B cell (primary cell): ENCODE measurements at regions of chr5 and their contacts with region 1.

Region 1: DNA sequence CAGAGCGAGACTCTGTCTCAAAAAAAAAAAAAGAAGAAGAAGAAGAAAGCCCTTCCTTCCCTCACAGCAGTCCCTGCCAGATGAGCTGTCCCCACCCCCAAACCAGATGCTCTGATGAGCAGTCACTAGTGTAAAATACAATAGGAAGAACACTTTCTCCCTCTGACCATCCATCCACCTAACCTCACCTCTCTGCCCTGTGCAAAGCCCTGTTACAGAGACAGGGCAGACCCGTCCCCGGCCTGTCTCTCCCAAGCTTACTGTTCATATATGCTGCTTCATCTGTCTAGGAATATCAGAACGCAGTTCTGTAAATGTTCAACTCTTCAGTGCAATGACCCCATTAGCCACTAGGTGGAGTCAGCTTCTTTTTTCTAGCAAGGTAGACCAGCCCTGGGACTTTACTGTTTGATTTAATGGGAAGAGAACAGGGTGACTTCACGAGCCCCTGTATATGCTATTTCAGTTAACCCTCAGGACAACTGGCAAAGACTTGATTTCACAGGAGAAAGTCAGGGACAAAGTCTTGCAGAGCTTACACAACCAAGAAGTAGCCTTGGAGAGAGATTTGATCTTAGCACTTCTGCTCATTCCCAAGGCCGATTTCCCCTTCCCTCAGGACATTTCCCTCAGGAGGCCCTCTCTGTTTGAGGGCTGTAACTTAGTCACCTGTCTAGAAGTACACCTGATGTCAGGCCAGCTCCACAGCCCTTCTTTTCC is 14.9 kb upstream of the FGFR4 start:
- DNase-seq: peak; percentile 90
- ATAC-seq: peak; percentile 88
- H3K4me3 ChIP-seq: peak overlapping the region in 3 of 5 experiments; percentile 11 to 25 (median 23)
- H3K4me3 Mint-ChIP-seq: peak overlapping the region; percentile 64
- H3K27ac ChIP-seq: peak overlapping the region; percentile 11 to 79
- H3K27ac Mint-ChIP-seq: peak overlapping the region; percentile 66
- H3K4me1 ChIP-seq: peaks cover 25 to 33% of the 10 kb centered on the region in 2 donors
- H3K4me1 Mint-ChIP-seq: peaks cover 31% of the 10 kb centered on the region
- H3K27me3 ChIP-seq: no peaks in the 10 kb centered on the region
- H3K27me3 Mint-ChIP-seq: no peaks in the 10 kb centered on the region
- CTCF ChIP-seq: peak; percentile 95

Region 2: GRCh38 chr5:176916337-176916736 is 155.5 kb before region 1 on chr5:
- CTCF ChIA-PET with region 1: no interaction called
- POLR2A ChIA-PET with region 1: no interaction called
- intact Hi-C with region 1: no loop called
- DNase-seq: no peak
- ATAC-seq: no peak
- H3K4me3 ChIP-seq: no peak overlapping the region
- H3K4me3 Mint-ChIP-seq: no peak overlapping the region
- H3K27ac ChIP-seq: no peak overlapping the region
- H3K27ac Mint-ChIP-seq: no peak overlapping the region
- H3K4me1 ChIP-seq: no peaks in the 10 kb centered on the region
- H3K4me1 Mint-ChIP-seq: no peaks in the 10 kb centered on the region
- H3K27me3 ChIP-seq: no peaks in the 10 kb centered on the region
- H3K27me3 Mint-ChIP-seq: no peaks in the 10 kb centered on the region
- CTCF ChIP-seq: no peak

Region 3: DNA sequence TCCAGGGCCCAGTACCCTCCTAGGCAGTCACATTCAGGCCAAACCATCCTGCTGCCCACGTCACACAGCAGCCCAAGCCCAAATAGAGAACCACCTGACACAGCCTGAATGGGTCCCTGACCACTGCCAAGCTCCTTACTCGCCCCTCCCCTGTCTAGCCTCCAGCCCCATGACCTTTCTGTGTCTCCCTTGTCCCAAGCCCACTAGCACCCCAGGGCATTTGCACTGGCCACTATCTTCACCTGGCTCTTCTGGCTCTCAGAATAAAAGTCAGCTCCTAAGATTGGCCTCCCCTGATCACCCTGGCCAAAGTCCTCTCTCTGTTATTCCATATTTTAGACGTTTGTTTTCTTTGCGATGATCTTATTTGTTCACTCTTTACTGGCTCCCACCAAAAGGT is 35.3 kb after region 1 on chr5:
- CTCF ChIA-PET with region 1: interaction called, 82 read pairs
- POLR2A ChIA-PET with region 1: no interaction called
- intact Hi-C with region 1: loop called (anchors 1 kb)
- DNase-seq: no peak
- ATAC-seq: no peak
- H3K4me3 ChIP-seq: no peak overlapping the region
- H3K4me3 Mint-ChIP-seq: no peak overlapping the region
- H3K27ac ChIP-seq: no peak overlapping the region
- H3K27ac Mint-ChIP-seq: no peak overlapping the region
- H3K4me1 ChIP-seq: peaks cover 0 to 6% of the 10 kb centered on the region in 2 donors
- H3K4me1 Mint-ChIP-seq: peaks cover 4% of the 10 kb centered on the region
- H3K27me3 ChIP-seq: peaks cover 0 to 5% (median 0%) of the 10 kb centered on the region in 4 experiments
- H3K27me3 Mint-ChIP-seq: peaks cover 7% of the 10 kb centered on the region
- CTCF ChIP-seq: no peak